Ascending aorta (tissue), 2 donors: ENCODE measurements at regions of chr4 and their contacts with region 1.

Region 1: DNA sequence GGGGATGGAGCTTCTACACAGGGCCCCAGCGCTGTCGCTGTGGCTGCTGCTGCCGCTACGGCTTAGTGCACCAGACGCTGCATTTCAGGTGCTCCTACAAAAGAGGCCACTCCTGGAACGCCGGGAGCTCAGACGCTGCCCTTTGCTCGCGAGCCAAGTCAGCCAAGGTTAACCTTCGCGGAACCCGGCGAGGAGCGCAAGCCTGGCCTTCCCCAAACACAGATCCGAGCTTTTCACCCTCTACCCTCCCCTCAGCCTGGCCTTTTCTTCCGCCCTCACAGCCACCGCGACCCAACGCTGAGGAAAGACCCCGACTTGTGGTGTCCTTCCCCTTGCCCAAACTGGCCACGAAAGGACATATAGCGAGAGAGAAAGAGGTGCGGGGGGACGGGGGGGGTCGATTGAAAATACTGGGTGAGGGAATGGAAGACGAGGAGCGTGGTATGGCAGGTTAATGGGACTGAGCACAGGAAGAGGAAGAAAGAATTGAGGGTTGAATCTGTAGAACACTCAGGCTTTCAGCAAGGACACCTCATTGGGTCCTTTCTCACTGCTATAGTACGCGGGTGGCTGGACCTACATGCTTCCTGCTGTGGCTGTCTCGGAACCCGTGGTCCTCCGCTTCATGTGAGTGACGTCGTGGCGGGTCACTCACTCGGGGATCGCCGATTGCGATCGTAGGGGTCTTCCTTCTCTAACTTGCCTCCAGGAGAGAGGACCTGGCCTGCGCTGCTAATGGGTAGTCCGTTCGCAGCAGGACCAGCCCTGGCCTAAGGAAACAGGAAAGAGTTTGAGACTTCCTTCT is at the starts of genes AIMP1 and TBCK:
- DNase-seq: peak; percentile 70 to 94
- H3K4me3 ChIP-seq: peak within 1 kb of the TSS; percentile 70 to 87
- H3K27ac ChIP-seq: peak within 1 kb of the TSS; percentile 89 to 97
- H3K4me1 ChIP-seq: peaks cover 3 to 32% of the 10 kb centered on the region in 2 donors
- H3K27me3 ChIP-seq: no peaks in the 10 kb centered on the region
- CTCF ChIP-seq: no peak
- total RNA-seq, gene AIMP1: 14.9 TPM
- total RNA-seq, gene TBCK: 35.7 TPM

Region 2: GRCh38 chr4:105536599-105536998 is 779.6 kb before region 1 on chr4:
- intact Hi-C with region 1: no loop called
- DNase-seq: no peak
- H3K4me3 ChIP-seq: no peak overlapping the region
- H3K27ac ChIP-seq: no peak overlapping the region
- H3K4me1 ChIP-seq: no peaks in the 10 kb centered on the region
- H3K27me3 ChIP-seq: no peaks in the 10 kb centered on the region
- CTCF ChIP-seq: no peak

Region 3: GRCh38 chr4:105708530-105709391 is 607.4 kb before region 1 on chr4 and contains the starts of genes GSTCD and INTS12:
- intact Hi-C with region 1: loop called (anchors 5 kb)
- DNase-seq: peak; percentile 61 to 95
- H3K4me3 ChIP-seq: peak within 1 kb of the TSS; percentile 76 to 87
- H3K27ac ChIP-seq: peak within 1 kb of the TSS; percentile 84 to 90
- H3K4me1 ChIP-seq: peaks cover 7 to 18% of the 10 kb centered on the region in 2 donors
- H3K27me3 ChIP-seq: no peaks in the 10 kb centered on the region
- CTCF ChIP-seq: no peak
- total RNA-seq, gene GSTCD: 4.4 TPM
- total RNA-seq, gene INTS12: 11.5 TPM

Region 4: GRCh38 chr4:105923497-105924238 is 392.5 kb before region 1 on chr4:
- intact Hi-C with region 1: loop called (anchors 10 kb)
- DNase-seq: peak in 1 of 2 donors; percentile 86
- H3K4me3 ChIP-seq: peak overlapping the region in 1 of 2 donors; percentile 8
- H3K27ac ChIP-seq: peak overlapping the region; percentile 52 to 65
- H3K4me1 ChIP-seq: peaks cover 0 to 39% of the 10 kb centered on the region in 2 donors
- H3K27me3 ChIP-seq: no peaks in the 10 kb centered on the region
- CTCF ChIP-seq: no peak

Region 5: GRCh38 chr4:106273831-106274230 is 42.3 kb before region 1 on chr4:
- intact Hi-C with region 1: loop called (anchors 5 kb)
- DNase-seq: no peak
- H3K4me3 ChIP-seq: no peak overlapping the region
- H3K27ac ChIP-seq: no peak overlapping the region
- H3K4me1 ChIP-seq: peaks cover 0 to 13% of the 10 kb centered on the region in 2 donors
- H3K27me3 ChIP-seq: no peaks in the 10 kb centered on the region
- CTCF ChIP-seq: no peak